Ascending aorta (tissue), 2 donors: ENCODE measurements at regions of chr1 and their contacts with region 1.

Region 1: DNA sequence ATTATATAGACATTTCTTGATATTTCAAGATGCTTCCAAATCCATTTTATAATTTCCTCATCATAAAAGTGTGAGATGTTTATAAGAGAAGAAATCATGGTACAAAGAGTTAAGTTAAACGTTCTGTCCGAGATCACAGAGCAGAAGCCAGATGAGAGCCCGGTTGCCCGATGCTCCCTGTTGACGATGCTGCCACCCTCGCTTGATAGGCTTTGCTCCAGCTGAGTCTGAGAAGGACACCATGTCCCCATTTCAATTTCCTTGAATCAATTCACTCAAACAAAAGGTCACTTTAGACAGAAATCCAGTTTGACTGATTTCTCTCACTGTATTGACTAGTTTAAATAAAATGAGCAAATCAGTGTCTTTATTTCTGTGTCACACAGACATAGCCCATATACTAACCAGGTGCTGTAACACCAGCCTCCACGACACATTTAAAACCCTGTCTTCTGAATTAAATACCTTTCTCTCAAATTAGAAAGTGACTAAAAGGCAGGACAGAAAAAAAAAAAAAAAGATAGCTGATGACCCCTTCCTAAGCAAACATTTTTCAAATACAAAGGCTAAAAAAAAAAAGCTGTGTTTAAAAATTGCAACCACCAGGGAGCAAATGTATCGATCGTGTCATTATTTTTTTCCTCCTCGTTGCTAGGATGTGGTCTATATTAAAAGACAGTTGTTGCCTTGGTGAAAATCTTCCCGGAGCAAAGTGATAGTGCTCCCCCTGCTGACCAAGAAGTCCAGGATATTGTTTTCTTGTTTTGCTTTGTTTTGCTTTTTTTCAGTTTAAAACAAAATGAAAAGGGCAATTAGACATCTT is 35.2 kb downstream of the DNASE2B start:
- DNase-seq: peak in 1 of 2 donors; percentile 69
- H3K4me3 ChIP-seq: peak overlapping the region; percentile 29 to 40
- H3K27ac ChIP-seq: no peak overlapping the region
- H3K4me1 ChIP-seq: no peaks in the 10 kb centered on the region
- H3K27me3 ChIP-seq: no peaks in the 10 kb centered on the region
- CTCF ChIP-seq: peak; percentile 42 to 76 (median 65)

Region 2: GRCh38 chr1:84143796-84144565 is 289.5 kb before region 1 on chr1 and contains the start of gene PRKACB:
- intact Hi-C with region 1: loop called (anchors 2 kb)
- DNase-seq: no peak
- H3K4me3 ChIP-seq: no peak within 1 kb of the TSS
- H3K27ac ChIP-seq: no peak within 1 kb of the TSS
- H3K4me1 ChIP-seq: no peaks in the 10 kb centered on the region
- H3K27me3 ChIP-seq: no peaks in the 10 kb centered on the region
- CTCF ChIP-seq: no peak
- total RNA-seq, gene PRKACB: 23.7 TPM

Region 3: GRCh38 chr1:84450910-84451309 is 17.4 kb after region 1 on chr1:
- intact Hi-C with region 1: no loop called
- DNase-seq: no peak
- H3K4me3 ChIP-seq: no peak overlapping the region
- H3K27ac ChIP-seq: no peak overlapping the region
- H3K4me1 ChIP-seq: no peaks in the 10 kb centered on the region
- H3K27me3 ChIP-seq: no peaks in the 10 kb centered on the region
- CTCF ChIP-seq: no peak